ENCODE measurements at regions of chr2 and their contacts with region 1.

Region 1: GRCh38 chr2:134668821-134669220 is 50.0 kb downstream of the TMEM163 start:
- DNase-seq: peak; percentile 42
- H3K4me3 ChIP-seq: no peak overlapping the region
- CTCF ChIP-seq: no peak

Region 2: GRCh38 chr2:134564549-134564948 is 104.3 kb before region 1 on chr2:
- in situ Hi-C with region 1: loop called (anchors 5 kb)
- DNase-seq: no peak
- H3K4me3 ChIP-seq: no peak overlapping the region
- CTCF ChIP-seq: no peak

Region 3: DNA sequence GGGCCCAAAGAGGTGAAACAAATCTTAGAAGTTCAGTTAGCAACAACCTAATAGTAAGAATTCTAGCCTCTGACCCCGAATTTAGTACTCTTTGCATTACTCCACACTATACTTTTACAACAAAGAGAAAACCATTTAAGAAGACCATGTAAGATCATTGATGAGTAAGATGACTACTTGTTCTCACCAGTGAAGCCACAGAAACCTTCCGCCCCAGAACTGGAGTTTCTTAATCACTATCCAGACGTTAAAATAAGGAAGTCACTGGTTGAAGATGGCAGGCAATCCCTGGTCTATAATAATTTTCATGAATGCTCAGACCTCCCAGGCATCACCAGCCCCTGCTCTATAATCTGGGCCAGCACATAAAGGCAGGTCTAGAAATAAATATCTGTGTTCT is 45.0 kb before region 1 on chr2:
- in situ Hi-C with region 1: no loop called
- DNase-seq: no peak
- H3K4me3 ChIP-seq: no peak overlapping the region
- CTCF ChIP-seq: no peak